Stomach (tissue), 19 donors: ENCODE measurements at regions of chr10 and their contacts with region 1.

Region 1: GRCh38 chr10:69237528-69238159 is 17.5 kb downstream of the HKDC1 start:
- DNase-seq: peak; percentile 90 to 93
- H3K4me3 ChIP-seq: no peak overlapping the region
- H3K27ac ChIP-seq: no peak overlapping the region
- H3K4me1 ChIP-seq: peaks cover 0 to 20% (median 3%) of the 10 kb centered on the region in 4 donors
- H3K27me3 ChIP-seq: no peaks in the 10 kb centered on the region
- CTCF ChIP-seq: peak in 5 of 7 experiments; percentile 78 to 95 (median 90)
- EP300 ChIP-seq: no peak
- POLR2A ChIP-seq: no peak

Region 2: GRCh38 chr10:69392481-69393000 is 154.9 kb after region 1 on chr10:
- intact Hi-C with region 1: loop called (anchors 5 kb)
- DNase-seq: peak; percentile 89 to 95
- H3K4me3 ChIP-seq: no peak overlapping the region
- H3K27ac ChIP-seq: peak overlapping the region in 2 of 5 donors; percentile 29 to 50
- H3K4me1 ChIP-seq: peaks cover 5 to 33% (median 16%) of the 10 kb centered on the region in 4 donors
- H3K27me3 ChIP-seq: no peaks in the 10 kb centered on the region
- CTCF ChIP-seq: peak in 6 of 7 experiments; percentile 72 to 99 (median 95)
- EP300 ChIP-seq: no peak
- POLR2A ChIP-seq: no peak

Region 3: GRCh38 chr10:69515699-69516259 is 278.1 kb after region 1 on chr10:
- intact Hi-C with region 1: loop called (anchors 10 kb)
- DNase-seq: peak; percentile 79 to 89
- H3K4me3 ChIP-seq: no peak overlapping the region
- H3K27ac ChIP-seq: no peak overlapping the region
- H3K4me1 ChIP-seq: no peaks in the 10 kb centered on the region
- H3K27me3 ChIP-seq: peaks cover 0 to 3% (median 0%) of the 10 kb centered on the region in 3 donors
- CTCF ChIP-seq: peak in 5 of 7 experiments; percentile 54 to 68 (median 64)
- EP300 ChIP-seq: no peak
- POLR2A ChIP-seq: no peak